ENCODE measurements at regions of chr12 and their contacts with region 1.

Region 1: DNA sequence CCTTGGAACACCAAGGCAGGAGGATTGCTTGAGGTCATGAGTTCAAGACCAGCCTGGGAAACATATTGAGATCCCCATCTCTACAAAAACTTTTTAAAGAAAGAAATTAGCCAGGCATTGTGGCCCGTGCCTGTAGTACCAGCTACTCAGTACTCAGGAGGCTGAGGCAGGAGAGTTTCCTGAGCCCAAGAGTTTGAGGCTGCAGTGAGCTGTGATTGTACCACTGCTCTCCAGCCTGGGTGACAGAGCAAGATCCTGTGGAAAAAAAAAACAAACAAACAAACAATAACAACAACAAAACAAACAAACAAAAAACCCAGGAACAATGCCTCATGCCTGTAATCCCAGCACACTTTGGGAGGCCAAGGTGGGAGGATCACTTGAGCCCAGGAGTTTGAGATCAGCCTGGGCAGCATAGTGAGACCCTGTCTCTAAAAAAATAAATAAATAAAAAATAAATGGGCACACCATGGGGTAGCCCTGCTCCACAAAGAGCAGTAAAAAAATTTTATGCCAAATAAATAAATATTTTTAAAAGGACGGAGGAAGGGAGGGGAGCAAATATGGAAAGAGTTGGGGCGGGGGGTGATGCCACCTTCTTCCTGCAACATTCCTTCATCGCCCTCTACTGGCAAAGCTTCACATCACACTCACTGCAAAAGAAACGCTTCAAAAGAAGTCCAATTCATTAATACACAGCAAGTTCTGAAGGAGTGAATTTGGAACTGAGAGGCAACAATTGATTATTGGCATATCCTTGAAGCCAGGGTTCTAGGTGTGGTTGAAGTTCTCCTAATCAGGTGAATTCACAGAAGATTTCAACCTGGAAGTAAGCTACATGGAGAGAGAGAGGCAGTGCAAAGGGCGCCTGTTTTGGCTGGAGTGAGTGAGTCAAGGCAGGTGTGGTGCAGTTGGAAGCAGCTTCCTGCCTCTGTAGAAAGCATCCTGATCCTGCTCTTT is 8.8 kb upstream of the GNPTAB start:
- DNase-seq: peak; percentile 73
- H3K4me3 ChIP-seq: no peak overlapping the region
- H3K27ac ChIP-seq: no peak overlapping the region
- H3K4me1 ChIP-seq: no peaks in the 10 kb centered on the region
- H3K27me3 ChIP-seq: no peaks in the 10 kb centered on the region
- CTCF ChIP-seq: peak; percentile 92

Region 2: GRCh38 chr12:101414533-101415119 is 425.0 kb before region 1 on chr12:
- CTCF ChIA-PET with region 1: interaction called, 4 read pairs
- POLR2A ChIA-PET with region 1: no interaction called
- intact Hi-C with region 1: loop called (anchors 2 kb)
- DNase-seq: peak; percentile 56
- H3K4me3 ChIP-seq: no peak overlapping the region
- H3K27ac ChIP-seq: no peak overlapping the region
- H3K4me1 ChIP-seq: no peaks in the 10 kb centered on the region
- H3K27me3 ChIP-seq: no peaks in the 10 kb centered on the region
- CTCF ChIP-seq: peak; percentile 69

Region 3: DNA sequence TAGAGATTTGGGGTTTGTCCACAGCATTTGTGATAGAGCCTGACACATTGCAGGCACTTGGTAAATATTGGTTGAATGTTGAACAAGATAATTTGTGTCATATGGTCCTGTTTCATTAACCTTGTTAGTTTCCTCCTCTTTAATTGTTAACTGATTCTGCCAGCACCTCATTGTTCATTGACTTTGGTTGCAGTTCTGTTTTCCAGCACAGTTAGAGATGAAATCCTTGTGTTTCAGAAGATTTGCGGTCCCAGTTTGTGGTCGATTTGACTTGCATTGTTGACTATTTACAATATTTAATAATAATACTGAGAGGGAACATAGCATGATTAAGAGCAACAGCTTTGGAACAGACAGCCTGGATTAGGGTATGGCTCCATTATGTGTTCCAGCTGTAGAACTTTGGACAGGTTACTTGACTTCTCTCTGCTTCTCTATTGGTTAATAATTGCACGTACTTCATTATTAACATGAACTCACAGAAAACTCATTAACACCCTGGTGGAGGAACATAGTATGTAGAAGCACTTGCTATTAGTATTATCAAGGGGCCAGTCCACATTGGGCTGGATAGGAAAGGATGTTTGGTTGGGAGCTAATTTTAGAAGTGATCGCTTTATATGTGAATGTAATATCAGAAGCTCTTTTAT is 46.4 kb after region 1 on chr12:
- CTCF ChIA-PET with region 1: interaction called, 10 read pairs
- POLR2A ChIA-PET with region 1: no interaction called
- intact Hi-C with region 1: no loop called
- DNase-seq: no peak
- H3K4me3 ChIP-seq: no peak overlapping the region
- H3K27ac ChIP-seq: no peak overlapping the region
- H3K4me1 ChIP-seq: peaks cover 3% of the 10 kb centered on the region
- H3K27me3 ChIP-seq: no peaks in the 10 kb centered on the region
- CTCF ChIP-seq: no peak

Measured in A673 (cell line).